HAP-1 (cell line): ENCODE measurements at regions of chr9 and their contacts with region 1.

Region 1: DNA sequence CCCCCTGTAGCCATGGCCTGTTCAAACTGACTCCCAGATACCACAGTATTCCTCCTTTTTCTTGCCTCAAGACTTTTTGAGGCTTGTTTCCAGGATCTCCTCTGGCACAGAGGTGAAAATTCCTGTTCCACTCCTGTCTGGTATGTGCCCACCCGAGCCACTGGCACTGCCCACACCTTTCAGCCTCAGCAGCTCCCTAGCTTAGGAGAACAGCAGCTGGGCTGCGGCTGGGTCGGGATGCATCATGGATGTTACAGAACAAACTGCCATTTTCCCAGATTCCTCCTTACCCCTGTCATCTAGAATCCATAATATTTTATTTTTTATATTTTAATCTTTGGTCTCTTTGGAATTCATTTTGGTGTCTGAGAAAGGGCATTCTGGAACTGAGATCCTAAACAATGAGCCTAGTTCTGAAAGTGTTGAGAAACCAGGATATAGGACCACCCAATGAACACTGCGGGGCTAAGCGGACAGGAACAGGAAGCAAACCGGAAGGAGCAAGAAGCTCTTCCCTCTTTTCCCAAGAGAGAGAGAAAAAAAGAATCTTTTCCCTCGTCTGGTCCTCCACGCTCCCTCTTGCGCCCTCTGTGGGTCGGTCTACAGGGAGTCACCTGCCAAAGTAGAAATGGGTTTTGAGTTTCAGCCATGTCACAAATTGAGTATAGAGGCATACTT is 12.5 kb downstream of the OR2S2 start:
- DNase-seq: peak; percentile 95 to 98
- H3K4me3 ChIP-seq: peak overlapping the region; percentile 20
- H3K4me1 ChIP-seq: peaks cover 2% of the 10 kb centered on the region; the same call in 1 of the 2 replicates
- H3K27me3 ChIP-seq: 0 out of 2 replicates have a peak, but pooled peaks cover 2% of the 10 kb centered on the region

Region 2: DNA sequence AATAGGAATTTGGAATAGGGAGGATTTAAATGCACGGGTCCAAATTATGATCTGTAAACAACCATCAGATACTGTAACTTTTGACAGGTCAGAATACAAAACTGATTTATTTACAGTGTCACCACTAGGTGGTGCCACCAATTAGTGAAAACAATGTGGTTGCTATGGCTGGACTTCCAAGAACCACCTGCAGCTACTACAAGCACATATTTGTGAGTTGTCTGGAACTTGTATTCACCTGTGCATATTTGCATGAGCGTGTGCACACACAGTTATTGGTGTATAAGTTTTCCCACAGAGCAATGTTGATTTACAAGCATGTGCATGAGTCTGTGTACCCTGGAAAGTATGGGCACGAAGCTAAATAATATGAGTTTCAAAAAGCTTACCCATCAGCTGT is 42.4 kb before region 1 on chr9:
- in situ Hi-C with region 1: loop called (anchors 5 kb)
- DNase-seq: peak; percentile 48 to 50
- H3K4me3 ChIP-seq: no peak overlapping the region
- H3K4me1 ChIP-seq: peaks cover 10% of the 10 kb centered on the region
- H3K27me3 ChIP-seq: peaks cover 16% of the 10 kb centered on the region